SK-N-SH (cell line): ENCODE measurements at regions of chr14 and their contacts with region 1.

Region 1: DNA sequence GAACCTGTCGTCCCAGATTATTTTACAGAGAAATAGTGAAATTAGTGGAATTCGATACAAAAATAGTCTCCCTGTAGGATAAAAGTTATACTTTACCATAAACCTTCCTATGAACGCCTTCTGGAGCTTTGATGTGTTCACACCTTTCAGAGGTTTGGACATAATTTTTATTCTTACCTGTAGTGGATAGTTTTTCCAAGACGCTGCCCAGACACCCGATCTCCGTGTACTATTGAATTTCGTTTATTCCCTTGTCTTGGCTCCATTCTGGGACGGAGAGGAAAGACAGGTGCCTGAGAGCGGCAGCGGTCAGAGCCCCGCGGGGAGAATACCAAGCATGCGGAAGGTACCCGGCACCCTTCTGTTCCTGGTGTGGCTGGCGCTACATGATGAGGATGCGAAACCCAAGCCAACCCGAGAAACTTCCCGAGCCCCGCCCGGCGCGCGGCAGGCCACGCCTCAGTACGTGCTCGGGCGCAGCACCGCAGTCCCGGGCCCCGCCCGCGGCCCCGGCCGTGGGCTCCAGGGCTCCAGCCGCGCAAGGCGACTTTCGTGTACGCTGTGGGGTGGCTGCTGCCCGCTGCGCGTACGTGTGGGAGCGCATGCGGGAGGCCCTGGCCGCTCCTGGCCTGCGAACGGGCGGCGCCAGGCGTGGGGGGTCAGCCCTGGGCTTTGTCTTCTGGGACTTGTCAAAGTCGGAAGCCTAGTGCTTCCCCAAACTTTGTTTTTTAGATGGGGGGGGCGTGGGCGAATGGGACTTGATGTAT is 11.3 kb upstream of the SNAPC1 start:
- DNase-seq: peak; percentile 52
- H3K4me3 ChIP-seq: peak overlapping the region in 1 of 2 experiments; percentile 19; a peak in 1 of 4 replicates
- H3K27ac ChIP-seq: no peak overlapping the region
- H3K4me1 ChIP-seq: peaks cover 0 to 11% of the 10 kb centered on the region in 2 experiments; a peak in 1 of 4 replicates
- H3K27me3 ChIP-seq: no peaks in the 10 kb centered on the region
- CTCF ChIP-seq: no peak
- EP300 ChIP-seq: no peak
- RAD21 ChIP-seq: no peak

Region 2: DNA sequence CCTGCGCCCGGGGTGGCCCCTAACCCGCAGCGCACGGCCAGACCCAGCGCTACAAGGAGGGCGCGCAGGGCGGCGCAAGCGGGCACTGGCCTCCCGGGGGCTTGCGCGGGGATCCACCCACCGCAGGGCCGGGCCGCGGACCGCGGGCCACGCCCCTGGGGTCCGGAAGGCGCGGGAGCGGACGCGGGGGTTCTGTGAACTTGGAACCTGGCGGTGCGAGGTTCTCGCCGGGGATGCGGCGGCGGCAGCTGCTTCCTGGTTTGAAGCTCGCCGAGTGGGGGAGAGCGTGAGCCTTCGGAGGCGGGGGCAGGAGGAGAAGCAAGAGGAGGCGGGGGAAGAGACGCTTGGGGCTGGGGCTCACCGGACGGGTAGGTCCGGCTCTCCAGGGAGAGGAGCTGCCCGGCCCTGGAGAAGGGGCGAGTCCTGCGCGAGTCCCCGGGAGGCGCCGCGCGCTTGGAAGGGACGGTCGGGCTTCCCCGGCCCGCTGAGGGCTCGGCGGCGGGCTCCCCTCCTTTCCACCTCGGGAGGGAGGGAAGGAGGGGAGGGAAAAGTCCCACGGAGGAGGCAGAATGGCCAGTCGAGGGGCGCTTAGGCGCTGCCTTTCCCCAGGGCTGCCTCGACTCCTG is 429.4 kb before region 1 on chr14 and contains the start of gene PRKCH:
- CTCF ChIA-PET with region 1: no interaction called
- POLR2A ChIA-PET with region 1: no interaction called
- DNase-seq: peak; percentile 82
- H3K4me3 ChIP-seq: peak within 1 kb of the TSS; percentile 62 to 65
- H3K27ac ChIP-seq: no peak within 1 kb of the TSS
- H3K4me1 ChIP-seq: peaks cover 0 to 10% of the 10 kb centered on the region in 2 experiments; a peak in 1 of 4 replicates
- H3K27me3 ChIP-seq: peaks cover 10% of the 10 kb centered on the region
- CTCF ChIP-seq: 0 out of 2 replicates have a peak, but pooled peaks have one; percentile 20
- EP300 ChIP-seq: no peak
- RAD21 ChIP-seq: no peak
- polyA plus RNA-seq, gene PRKCH: 3.9 and 4.2 TPM in 2 replicates

Region 3: DNA sequence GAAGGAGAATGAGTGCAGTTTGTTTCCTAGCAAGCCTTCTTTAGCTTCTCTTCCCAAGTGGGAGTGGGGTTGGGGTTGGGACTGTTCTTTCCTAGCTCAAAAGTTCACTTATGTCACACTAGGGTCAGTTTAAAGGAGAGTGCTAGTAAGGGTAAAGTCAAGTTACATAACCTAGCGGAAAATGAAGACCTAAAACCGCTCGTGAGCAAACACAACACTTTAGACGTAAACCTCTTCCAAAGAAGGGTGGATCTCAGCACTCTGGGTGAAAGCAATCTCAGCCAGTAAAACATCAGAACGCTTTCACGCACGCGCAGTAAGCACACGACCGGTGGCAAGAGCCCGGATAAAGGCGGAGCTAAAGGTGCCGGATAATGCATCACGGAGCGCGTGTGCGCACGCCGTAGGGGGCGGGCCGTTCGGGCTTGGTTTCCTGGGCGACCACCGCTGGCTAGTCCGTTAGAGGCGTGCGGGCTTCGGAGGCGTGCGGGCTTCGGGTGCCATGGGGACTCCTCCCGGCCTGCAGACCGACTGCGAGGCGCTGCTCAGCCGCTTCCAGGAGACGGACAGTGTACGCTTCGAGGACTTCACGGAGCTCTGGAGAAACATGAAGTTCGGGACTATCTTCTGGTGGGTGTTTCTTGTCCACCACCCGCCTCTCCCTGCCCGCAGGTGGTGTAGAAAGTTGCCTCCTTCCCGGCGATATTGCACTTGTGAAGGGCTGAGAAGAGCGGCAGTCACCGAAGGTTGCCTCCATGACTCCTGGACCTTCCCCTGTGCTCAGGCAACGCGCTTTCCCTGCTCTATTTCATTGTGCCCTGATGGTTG is 11.3 kb after region 1 on chr14 and contains the start of gene SNAPC1:
- CTCF ChIA-PET with region 1: interaction called, 5 read pairs
- POLR2A ChIA-PET with region 1: interaction called, 12 read pairs
- DNase-seq: peak; percentile 97
- H3K4me3 ChIP-seq: peak within 1 kb of the TSS; percentile 81 to 84
- H3K27ac ChIP-seq: peak within 1 kb of the TSS; percentile 81 to 92
- H3K4me1 ChIP-seq: peaks cover 12 to 15% of the 10 kb centered on the region in 2 experiments; a peak in 3 of 4 replicates
- H3K27me3 ChIP-seq: no peaks in the 10 kb centered on the region
- CTCF ChIP-seq: no peak
- EP300 ChIP-seq: no peak
- RAD21 ChIP-seq: no peak
- polyA plus RNA-seq, gene SNAPC1: 3.4 and 4.6 TPM in 2 replicates